ENCODE measurements at regions of chr4 and their contacts with region 1.

Region 1: GRCh38 chr4:102500696-102501446 is at the start of gene NFKB1:
- DNase-seq: peak; percentile 83 to 95 (median 88)
- H3K4me3 ChIP-seq: peak within 1 kb of the TSS; percentile 88 to 97
- H3K4me3 Mint-ChIP-seq: peak within 1 kb of the TSS; percentile 91 to 98 (median 94)
- H3K27ac ChIP-seq: peak within 1 kb of the TSS; percentile 100
- H3K27ac Mint-ChIP-seq: peak within 1 kb of the TSS; percentile 97 to 100 (median 98)
- H3K4me1 ChIP-seq: peaks cover 37% of the 10 kb centered on the region
- H3K4me1 Mint-ChIP-seq: peaks cover 18 to 39% (median 26%) of the 10 kb centered on the region in 4 donors
- H3K27me3 ChIP-seq: no peaks in the 10 kb centered on the region
- H3K27me3 Mint-ChIP-seq: no peaks in the 10 kb centered on the region
- total RNA-seq, gene NFKB1: 79.8 to 84.9 TPM

Region 2: GRCh38 chr4:101801958-101802357 is 698.9 kb before region 1 on chr4:
- CTCF ChIA-PET with region 1: no interaction called
- POLR2A ChIA-PET with region 1: no interaction called
- intact Hi-C with region 1: no loop called
- DNase-seq: no peak
- H3K4me3 ChIP-seq: no peak overlapping the region
- H3K4me3 Mint-ChIP-seq: no peak overlapping the region
- H3K27ac ChIP-seq: no peak overlapping the region
- H3K27ac Mint-ChIP-seq: no peak overlapping the region
- H3K4me1 ChIP-seq: no peaks in the 10 kb centered on the region
- H3K4me1 Mint-ChIP-seq: no peaks in the 10 kb centered on the region
- H3K27me3 ChIP-seq: no peaks in the 10 kb centered on the region
- H3K27me3 Mint-ChIP-seq: peaks cover 4 to 14% of the 10 kb centered on the region in 2 donors

Region 3: GRCh38 chr4:102344954-102345794 is 155.7 kb before region 1 on chr4 and contains the start of gene SLC39A8:
- CTCF ChIA-PET with region 1: no interaction called
- POLR2A ChIA-PET with region 1: interaction called, 10 read pairs
- intact Hi-C with region 1: loop called (anchors 10 kb)
- DNase-seq: peak; percentile 86 to 95 (median 89)
- H3K4me3 ChIP-seq: peak within 1 kb of the TSS; percentile 80 to 83
- H3K4me3 Mint-ChIP-seq: peak within 1 kb of the TSS; percentile 86 to 95 (median 94)
- H3K27ac ChIP-seq: peak within 1 kb of the TSS; percentile 91
- H3K27ac Mint-ChIP-seq: peak within 1 kb of the TSS; percentile 86 to 99 (median 98)
- H3K4me1 ChIP-seq: peaks cover 47% of the 10 kb centered on the region
- H3K4me1 Mint-ChIP-seq: peaks cover 24 to 56% (median 42%) of the 10 kb centered on the region in 4 donors
- H3K27me3 ChIP-seq: no peaks in the 10 kb centered on the region
- H3K27me3 Mint-ChIP-seq: no peaks in the 10 kb centered on the region
- total RNA-seq, gene SLC39A8: 24.6 to 25.7 TPM

Region 4: GRCh38 chr4:102518703-102519131 is 17.8 kb after region 1 on chr4:
- CTCF ChIA-PET with region 1: interaction called, 4 read pairs
- POLR2A ChIA-PET with region 1: interaction called, 50 read pairs
- intact Hi-C with region 1: loop called (anchors 1 kb)
- DNase-seq: peak; percentile 65 to 80 (median 75)
- H3K4me3 ChIP-seq: no peak overlapping the region
- H3K4me3 Mint-ChIP-seq: peak overlapping the region in 7 of 8 donors; percentile 60 to 78 (median 69)
- H3K27ac ChIP-seq: peak overlapping the region; percentile 57
- H3K27ac Mint-ChIP-seq: peak overlapping the region; percentile 73 to 96 (median 94)
- H3K4me1 ChIP-seq: peaks cover 65% of the 10 kb centered on the region
- H3K4me1 Mint-ChIP-seq: peaks cover 54 to 85% (median 67%) of the 10 kb centered on the region in 4 donors
- H3K27me3 ChIP-seq: no peaks in the 10 kb centered on the region
- H3K27me3 Mint-ChIP-seq: no peaks in the 10 kb centered on the region

Region 5: DNA sequence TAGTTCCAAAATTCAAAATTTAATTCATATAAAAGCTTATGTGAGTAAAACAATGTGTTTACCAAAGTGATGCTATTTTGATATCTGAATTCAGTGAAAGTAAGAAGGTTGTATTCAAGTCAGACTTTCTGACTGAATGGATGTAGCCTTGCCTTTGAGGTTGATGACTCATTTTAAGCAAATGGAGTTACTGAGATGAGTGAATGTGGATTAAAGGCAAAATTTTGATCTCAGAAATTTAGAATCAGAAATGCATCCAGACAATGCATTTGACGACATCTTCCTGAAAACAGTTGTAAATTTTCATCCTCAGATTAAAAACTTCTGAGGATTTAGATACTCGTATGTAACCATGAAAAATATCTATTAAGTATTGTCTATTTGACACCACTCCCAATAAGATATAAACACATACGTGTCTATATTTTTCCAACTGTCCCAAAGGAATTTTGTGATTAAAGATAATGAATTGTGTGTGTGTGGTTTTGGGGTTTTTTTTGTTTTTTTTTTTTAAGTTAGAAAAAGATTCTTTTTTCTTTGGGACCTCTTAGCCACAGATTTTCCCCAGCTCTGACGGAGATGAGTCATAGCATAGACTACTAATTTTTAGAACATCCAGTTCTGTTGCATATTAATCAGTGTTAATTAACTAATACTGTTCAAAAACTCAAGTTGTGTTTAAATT is 34.7 kb after region 1 on chr4:
- CTCF ChIA-PET with region 1: interaction called, 3 read pairs
- POLR2A ChIA-PET with region 1: interaction called, 12 read pairs
- intact Hi-C with region 1: no loop called
- DNase-seq: peak in 1 of 5 donors; percentile 22
- H3K4me3 ChIP-seq: no peak overlapping the region
- H3K4me3 Mint-ChIP-seq: peak overlapping the region in 1 of 8 donors; percentile 39
- H3K27ac ChIP-seq: no peak overlapping the region
- H3K27ac Mint-ChIP-seq: peak overlapping the region in 3 of 7 donors; percentile 14 to 78 (median 19)
- H3K4me1 ChIP-seq: peaks cover 43% of the 10 kb centered on the region
- H3K4me1 Mint-ChIP-seq: peaks cover 28 to 69% (median 38%) of the 10 kb centered on the region in 4 donors
- H3K27me3 ChIP-seq: no peaks in the 10 kb centered on the region
- H3K27me3 Mint-ChIP-seq: no peaks in the 10 kb centered on the region

Region 6: GRCh38 chr4:102610007-102610406 is 109.1 kb after region 1 on chr4:
- CTCF ChIA-PET with region 1: interaction called, 6 read pairs
- POLR2A ChIA-PET with region 1: interaction called, 41 read pairs
- intact Hi-C with region 1: loop called (anchors 2 kb)
- DNase-seq: no peak
- H3K4me3 ChIP-seq: no peak overlapping the region
- H3K4me3 Mint-ChIP-seq: peak overlapping the region in 5 of 8 donors; percentile 1 to 83 (median 44)
- H3K27ac ChIP-seq: no peak overlapping the region
- H3K27ac Mint-ChIP-seq: peak overlapping the region; percentile 18 to 99 (median 94)
- H3K4me1 ChIP-seq: peaks cover 84% of the 10 kb centered on the region
- H3K4me1 Mint-ChIP-seq: peaks cover 54 to 95% (median 76%) of the 10 kb centered on the region in 4 donors
- H3K27me3 ChIP-seq: no peaks in the 10 kb centered on the region
- H3K27me3 Mint-ChIP-seq: no peaks in the 10 kb centered on the region

Region 7: GRCh38 chr4:102627831-102628523 is 127.1 kb after region 1 on chr4:
- CTCF ChIA-PET with region 1: interaction called, 6 read pairs
- POLR2A ChIA-PET with region 1: interaction called, 11 read pairs
- intact Hi-C with region 1: loop called (anchors 1 kb)
- DNase-seq: peak in 1 of 5 donors; percentile 49
- H3K4me3 ChIP-seq: no peak overlapping the region
- H3K4me3 Mint-ChIP-seq: peak overlapping the region in 4 of 8 donors; percentile 13 to 71 (median 38)
- H3K27ac ChIP-seq: no peak overlapping the region
- H3K27ac Mint-ChIP-seq: peak overlapping the region in 5 of 7 donors; percentile 35 to 93 (median 81)
- H3K4me1 ChIP-seq: peaks cover 66% of the 10 kb centered on the region
- H3K4me1 Mint-ChIP-seq: peaks cover 47 to 94% (median 65%) of the 10 kb centered on the region in 4 donors
- H3K27me3 ChIP-seq: no peaks in the 10 kb centered on the region
- H3K27me3 Mint-ChIP-seq: no peaks in the 10 kb centered on the region

Region 8: DNA sequence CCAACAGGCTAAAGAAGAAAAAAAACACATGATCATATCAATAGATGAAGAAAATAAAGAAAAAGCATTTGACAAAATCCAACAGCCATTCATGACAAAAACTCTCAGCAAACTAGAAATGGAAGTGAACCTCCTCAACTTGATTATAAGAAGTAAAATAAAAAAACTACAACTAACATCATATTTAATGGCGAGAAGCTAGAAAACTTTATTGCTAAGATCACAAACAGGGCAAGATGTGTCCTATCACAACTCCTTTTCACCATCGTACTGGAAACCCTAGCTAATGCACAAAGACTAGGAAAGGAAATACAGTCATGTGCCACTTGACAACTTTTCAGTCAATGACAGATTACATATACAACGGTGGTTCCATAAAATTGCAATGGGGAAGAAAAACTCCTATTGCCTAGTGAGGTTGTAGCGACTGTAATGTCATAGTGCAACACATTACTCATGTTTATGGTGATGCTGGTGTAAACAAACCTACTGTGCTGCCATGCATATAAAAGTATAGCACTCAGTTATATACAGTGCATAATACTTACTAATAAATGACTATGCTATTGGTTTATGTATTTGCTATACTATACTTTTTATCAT is 272.0 kb after region 1 on chr4:
- CTCF ChIA-PET with region 1: no interaction called
- POLR2A ChIA-PET with region 1: no interaction called
- intact Hi-C with region 1: no loop called
- DNase-seq: no peak
- H3K4me3 ChIP-seq: no peak overlapping the region
- H3K4me3 Mint-ChIP-seq: no peak overlapping the region
- H3K27ac ChIP-seq: no peak overlapping the region
- H3K27ac Mint-ChIP-seq: no peak overlapping the region
- H3K4me1 ChIP-seq: no peaks in the 10 kb centered on the region
- H3K4me1 Mint-ChIP-seq: no peaks in the 10 kb centered on the region
- H3K27me3 ChIP-seq: no peaks in the 10 kb centered on the region
- H3K27me3 Mint-ChIP-seq: peaks cover 2 to 3% of the 10 kb centered on the region in 2 donors

Region 9: GRCh38 chr4:103008875-103009729 is 508.2 kb after region 1 on chr4:
- CTCF ChIA-PET with region 1: no interaction called
- POLR2A ChIA-PET with region 1: no interaction called
- intact Hi-C with region 1: loop called (anchors 2 kb)
- DNase-seq: peak; percentile 35 to 61 (median 59)
- H3K4me3 ChIP-seq: no peak overlapping the region
- H3K4me3 Mint-ChIP-seq: no peak overlapping the region
- H3K27ac ChIP-seq: no peak overlapping the region
- H3K27ac Mint-ChIP-seq: no peak overlapping the region
- H3K4me1 ChIP-seq: no peaks in the 10 kb centered on the region
- H3K4me1 Mint-ChIP-seq: peaks cover 0 to 2% (median 1%) of the 10 kb centered on the region in 4 donors
- H3K27me3 ChIP-seq: no peaks in the 10 kb centered on the region
- H3K27me3 Mint-ChIP-seq: peaks cover 0 to 1% of the 10 kb centered on the region in 2 donors